ENCODE measurements at regions of chr14 and their contacts with region 1.

Region 1: DNA sequence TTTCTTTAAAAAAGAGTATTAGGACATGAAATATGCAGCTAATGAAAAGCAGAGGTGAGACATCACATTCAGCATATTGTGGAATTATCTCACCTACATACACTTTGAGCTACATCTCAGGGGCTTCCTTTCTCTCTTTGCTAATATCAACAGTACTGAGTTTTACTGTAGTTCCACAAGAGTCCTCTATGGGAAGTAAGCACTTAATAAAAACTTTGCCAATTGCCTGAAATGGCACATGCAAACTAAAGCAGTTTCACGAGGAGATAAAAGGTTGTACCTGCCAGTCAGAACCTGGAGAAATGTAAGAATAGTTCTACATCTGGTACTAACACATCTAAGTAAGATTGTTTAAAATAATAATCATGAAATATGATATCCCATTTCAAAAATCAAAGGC is 73.5 kb upstream of the GPHB5 start:
- DNase-seq: no peak
- ATAC-seq: no peak
- H3K4me3 ChIP-seq: no peak overlapping the region
- H3K27ac ChIP-seq: no peak overlapping the region
- H3K4me1 ChIP-seq: no peaks in the 10 kb centered on the region
- H3K27me3 ChIP-seq: no peaks in the 10 kb centered on the region
- CTCF ChIP-seq: no peak

Region 2: DNA sequence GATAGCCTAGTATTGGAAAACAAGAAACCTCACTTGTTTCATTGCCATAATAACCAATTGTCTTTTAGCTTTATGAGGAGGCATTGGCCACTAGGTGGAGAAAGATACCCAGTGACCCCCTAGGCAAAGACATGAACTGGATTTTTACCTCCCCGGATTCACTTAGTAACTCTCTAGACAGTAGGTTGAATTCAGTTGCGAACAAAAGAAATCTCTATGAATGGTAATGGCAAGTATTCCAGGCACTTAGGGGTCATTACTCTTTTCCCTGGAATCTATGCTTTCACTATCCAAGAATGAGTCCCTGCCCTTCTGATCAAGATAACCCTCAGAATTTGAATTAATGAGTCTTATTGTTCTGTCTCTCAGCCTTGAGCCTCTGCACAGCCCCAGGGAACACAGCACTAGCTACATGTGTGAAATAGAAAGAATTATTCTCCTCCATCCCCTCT is 217.4 kb before region 1 on chr14:
- intact Hi-C with region 1: no loop called
- DNase-seq: peak in 1 of 4 donors; percentile 53
- ATAC-seq: peak; percentile 53
- H3K4me3 ChIP-seq: no peak overlapping the region
- H3K27ac ChIP-seq: no peak overlapping the region
- H3K4me1 ChIP-seq: no peaks in the 10 kb centered on the region
- H3K27me3 ChIP-seq: no peaks in the 10 kb centered on the region
- CTCF ChIP-seq: peak in 1 of 2 donors; percentile 59

Region 3: GRCh38 chr14:63203618-63204406 is 188.4 kb before region 1 on chr14:
- intact Hi-C with region 1: no loop called
- DNase-seq: peak in 3 of 4 donors; percentile 71 to 94 (median 90)
- ATAC-seq: peak; percentile 88
- H3K4me3 ChIP-seq: peak overlapping the region; percentile 32 to 38
- H3K27ac ChIP-seq: peak overlapping the region; percentile 79 to 90
- H3K4me1 ChIP-seq: no peaks in the 10 kb centered on the region
- H3K27me3 ChIP-seq: peaks cover 0 to 10% of the 10 kb centered on the region in 2 donors
- CTCF ChIP-seq: no peak

Region 4: DNA sequence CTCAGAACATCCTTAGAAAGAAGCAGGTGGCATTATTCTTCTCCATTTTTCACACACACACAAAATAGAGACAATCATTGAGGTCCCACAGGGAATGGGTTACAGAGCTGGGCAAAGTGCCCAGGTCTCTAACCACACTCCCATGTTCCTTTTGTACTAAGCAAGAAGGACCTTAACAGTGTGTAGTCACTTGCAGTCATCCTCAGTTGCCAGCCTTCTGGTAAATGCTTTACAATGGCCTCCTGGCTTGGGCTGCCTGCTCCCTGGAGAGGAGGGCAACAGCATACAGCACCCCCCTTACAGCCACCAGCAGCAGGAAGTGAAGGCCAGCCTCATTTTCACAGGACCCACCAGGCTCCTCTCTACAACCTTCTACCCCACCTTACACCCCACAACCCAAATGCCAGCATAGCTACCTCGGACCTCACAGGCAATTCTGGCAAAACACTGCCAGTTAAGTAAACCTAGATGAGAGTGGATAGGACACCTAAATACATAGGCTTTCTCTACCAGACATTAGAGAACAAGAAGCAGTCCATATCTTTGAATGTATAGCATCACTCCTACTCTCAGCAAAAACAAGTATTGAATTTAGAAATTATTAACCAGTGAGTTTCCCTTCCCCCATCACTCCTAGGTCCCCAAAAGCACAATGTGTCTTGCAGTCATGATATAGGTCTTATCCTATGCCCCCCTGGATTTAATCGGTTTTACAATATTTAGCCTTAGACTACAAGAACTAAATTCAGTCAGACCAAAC is 62.8 kb after region 1 on chr14:
- intact Hi-C with region 1: no loop called
- DNase-seq: peak in 1 of 4 donors; percentile 21
- ATAC-seq: peak; percentile 16
- H3K4me3 ChIP-seq: no peak overlapping the region
- H3K27ac ChIP-seq: no peak overlapping the region
- H3K4me1 ChIP-seq: peaks cover 0 to 7% of the 10 kb centered on the region in 2 donors
- H3K27me3 ChIP-seq: no peaks in the 10 kb centered on the region
- CTCF ChIP-seq: no peak

Region 5: DNA sequence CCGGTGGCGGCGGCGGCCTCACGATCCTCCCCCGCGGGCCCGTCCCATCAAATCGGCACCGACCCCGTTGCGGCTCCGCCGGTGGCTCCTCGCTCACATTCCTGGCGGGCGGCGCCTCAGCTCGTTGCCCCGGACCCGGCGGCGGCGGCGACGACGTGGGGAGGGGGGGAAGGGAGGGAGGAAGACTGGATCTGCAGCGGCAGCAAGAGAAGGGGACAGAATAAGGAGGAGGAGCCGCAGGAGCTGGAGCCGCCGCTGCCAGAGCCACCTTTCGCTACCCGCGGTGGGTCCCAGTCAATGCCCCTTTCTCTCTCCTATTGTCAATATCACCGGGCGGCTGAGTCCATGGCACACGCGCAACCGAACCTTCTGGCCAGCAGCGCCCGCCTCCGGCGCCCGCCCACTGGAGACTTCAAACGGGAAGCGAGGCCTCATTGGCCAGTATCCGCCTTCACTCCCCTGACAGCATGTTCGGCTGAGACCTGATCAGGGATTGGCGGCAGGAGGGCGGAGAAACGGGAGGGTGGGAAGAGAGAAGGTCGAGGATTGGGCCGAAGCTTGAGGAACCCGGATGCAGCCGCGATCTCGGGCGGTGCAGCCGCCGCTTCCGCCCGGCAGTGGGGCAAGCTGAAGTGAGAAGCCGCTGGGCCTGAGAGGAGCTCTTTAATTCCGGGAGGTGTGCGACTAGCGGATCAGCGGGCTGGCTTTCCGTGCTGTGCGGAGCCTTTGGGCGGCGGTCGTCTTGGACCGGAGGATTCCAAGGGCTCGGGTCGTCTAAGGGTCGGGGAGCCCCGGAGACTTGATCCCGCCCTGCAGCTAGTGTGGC is 151.0 kb after region 1 on chr14 and contains the start of gene PPP2R5E:
- intact Hi-C with region 1: loop called in 1 of 2 experiments (anchors 10 kb)
- DNase-seq: peak; percentile 96 to 99 (median 98)
- ATAC-seq: peak; percentile 97
- H3K4me3 ChIP-seq: peak within 1 kb of the TSS; percentile 99
- H3K27ac ChIP-seq: peak within 1 kb of the TSS; percentile 90 to 94
- H3K4me1 ChIP-seq: peaks cover 12 to 27% of the 10 kb centered on the region in 2 donors
- H3K27me3 ChIP-seq: no peaks in the 10 kb centered on the region
- CTCF ChIP-seq: no peak
- polyA plus RNA-seq, gene PPP2R5E: 33.4 to 41.9 (median 38.1) TPM

Region 6: GRCh38 chr14:64178814-64179213 is 786.6 kb after region 1 on chr14:
- intact Hi-C with region 1: no loop called
- DNase-seq: no peak
- ATAC-seq: no peak
- H3K4me3 ChIP-seq: no peak overlapping the region
- H3K27ac ChIP-seq: no peak overlapping the region
- H3K4me1 ChIP-seq: no peaks in the 10 kb centered on the region
- H3K27me3 ChIP-seq: no peaks in the 10 kb centered on the region
- CTCF ChIP-seq: no peak